Natural killer cell (primary cell): ENCODE measurements at regions of chr3 and their contacts with region 1.

Region 1: DNA sequence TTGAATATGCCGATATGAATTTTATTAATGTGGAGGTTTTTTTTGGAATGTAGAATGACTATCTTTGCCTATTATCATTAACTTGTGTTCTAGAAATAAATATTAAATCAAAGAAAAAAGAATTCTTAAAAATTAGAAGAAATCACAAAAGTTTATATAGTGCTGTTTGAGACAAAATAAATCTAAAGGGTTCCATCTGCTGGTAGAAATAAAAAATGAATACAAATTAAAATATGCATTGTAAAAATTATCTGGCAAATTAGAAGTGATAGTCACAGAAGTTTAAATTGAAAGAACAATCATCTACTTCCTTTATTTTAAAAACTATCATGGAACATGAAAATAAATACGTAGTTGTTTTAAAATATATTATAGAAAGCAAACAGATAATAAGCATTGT is 22.7 kb upstream of the ZBTB20 start:
- DNase-seq: peak in 1 of 2 donors; percentile 34
- ATAC-seq: no peak
- H3K4me3 ChIP-seq: no peak overlapping the region
- H3K4me3 Mint-ChIP-seq: no peak overlapping the region
- H3K27ac ChIP-seq: no peak overlapping the region
- H3K27ac Mint-ChIP-seq: no peak overlapping the region
- H3K4me1 ChIP-seq: peaks cover 5% of the 10 kb centered on the region
- H3K4me1 Mint-ChIP-seq: peaks cover 11 to 12% of the 10 kb centered on the region in 2 donors
- H3K27me3 ChIP-seq: peaks cover 2% of the 10 kb centered on the region
- H3K27me3 Mint-ChIP-seq: peaks cover 8 to 10% of the 10 kb centered on the region in 2 donors
- CTCF ChIP-seq: peak; percentile 53

Region 2: DNA sequence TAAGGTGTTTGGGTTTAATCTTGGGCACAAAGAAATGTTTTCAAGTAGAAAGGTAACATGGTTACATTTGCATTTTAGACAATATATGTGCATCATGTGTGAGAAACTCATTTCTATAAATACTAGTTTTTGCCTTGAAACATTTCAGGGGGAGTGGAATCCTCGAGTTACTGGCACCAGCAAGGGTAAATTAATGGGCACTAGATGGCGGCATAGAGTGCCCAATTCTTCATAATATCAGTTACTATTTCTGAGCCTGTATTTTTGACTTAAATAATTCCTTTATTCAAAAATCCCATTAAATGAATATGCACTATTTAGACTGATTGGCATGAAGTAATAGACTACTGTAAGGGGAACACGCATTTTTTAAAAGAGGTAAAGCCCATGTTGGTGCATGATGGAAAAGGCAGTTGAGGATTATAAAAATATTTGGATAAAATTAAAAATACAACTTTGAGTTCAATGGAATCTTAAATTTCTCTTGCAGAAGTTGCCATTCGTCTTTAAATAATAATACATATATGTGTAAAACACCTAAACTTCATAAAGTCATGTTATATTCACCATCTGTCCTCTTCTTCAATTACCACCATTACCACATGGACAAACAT is 129.0 kb before region 1 on chr3:
- intact Hi-C with region 1: loop called (anchors 5 kb)
- DNase-seq: peak in 1 of 2 donors; percentile 69
- ATAC-seq: peak in 2 of 3 donors; percentile 53 to 69
- H3K4me3 ChIP-seq: no peak overlapping the region
- H3K4me3 Mint-ChIP-seq: no peak overlapping the region
- H3K27ac ChIP-seq: no peak overlapping the region
- H3K27ac Mint-ChIP-seq: peak overlapping the region in 1 of 2 donors; percentile 10
- H3K4me1 ChIP-seq: no peaks in the 10 kb centered on the region
- H3K4me1 Mint-ChIP-seq: peaks cover 10 to 14% of the 10 kb centered on the region in 2 donors
- H3K27me3 ChIP-seq: no peaks in the 10 kb centered on the region
- H3K27me3 Mint-ChIP-seq: no peaks in the 10 kb centered on the region
- CTCF ChIP-seq: peak; percentile 75

Region 3: GRCh38 chr3:115092220-115092791 is 77.5 kb before region 1 on chr3:
- intact Hi-C with region 1: loop called (anchors 1 kb)
- DNase-seq: peak; percentile 35 to 81
- ATAC-seq: peak; percentile 64 to 70 (median 67)
- H3K4me3 ChIP-seq: no peak overlapping the region
- H3K4me3 Mint-ChIP-seq: no peak overlapping the region
- H3K27ac ChIP-seq: no peak overlapping the region
- H3K27ac Mint-ChIP-seq: no peak overlapping the region
- H3K4me1 ChIP-seq: no peaks in the 10 kb centered on the region
- H3K4me1 Mint-ChIP-seq: no peaks in the 10 kb centered on the region
- H3K27me3 ChIP-seq: no peaks in the 10 kb centered on the region
- H3K27me3 Mint-ChIP-seq: no peaks in the 10 kb centered on the region
- CTCF ChIP-seq: peak; percentile 79

Region 4: GRCh38 chr3:115226844-115227445 is 57.1 kb after region 1 on chr3:
- intact Hi-C with region 1: no loop called
- DNase-seq: no peak
- ATAC-seq: no peak
- H3K4me3 ChIP-seq: no peak overlapping the region
- H3K4me3 Mint-ChIP-seq: no peak overlapping the region
- H3K27ac ChIP-seq: no peak overlapping the region
- H3K27ac Mint-ChIP-seq: no peak overlapping the region
- H3K4me1 ChIP-seq: no peaks in the 10 kb centered on the region
- H3K4me1 Mint-ChIP-seq: no peaks in the 10 kb centered on the region
- H3K27me3 ChIP-seq: peaks cover 5% of the 10 kb centered on the region
- H3K27me3 Mint-ChIP-seq: peaks cover 17 to 45% of the 10 kb centered on the region in 2 donors
- CTCF ChIP-seq: no peak